ENCODE measurements at regions of chr1 and their contacts with region 1.

Region 1: GRCh38 chr1:18941221-18942141 is 15.0 kb downstream of the IFFO2 start:
- DNase-seq: no peak
- H3K4me3 ChIP-seq: peak overlapping the region in 1 of 4 experiments; percentile 0; a peak in 1 of 8 replicates
- H3K27ac ChIP-seq: peak overlapping the region; percentile 61
- H3K4me1 ChIP-seq: peaks cover 7 to 34% (median 27%) of the 10 kb centered on the region in 4 experiments
- H3K27me3 ChIP-seq: no peaks in the 10 kb centered on the region
- CTCF ChIP-seq: no peak
- EP300 ChIP-seq: no peak
- POLR2A ChIP-seq: peak in 1 of 2 experiments; percentile 39; a peak in 1 of 3 replicates
- RAD21 ChIP-seq: no peak

Region 2: DNA sequence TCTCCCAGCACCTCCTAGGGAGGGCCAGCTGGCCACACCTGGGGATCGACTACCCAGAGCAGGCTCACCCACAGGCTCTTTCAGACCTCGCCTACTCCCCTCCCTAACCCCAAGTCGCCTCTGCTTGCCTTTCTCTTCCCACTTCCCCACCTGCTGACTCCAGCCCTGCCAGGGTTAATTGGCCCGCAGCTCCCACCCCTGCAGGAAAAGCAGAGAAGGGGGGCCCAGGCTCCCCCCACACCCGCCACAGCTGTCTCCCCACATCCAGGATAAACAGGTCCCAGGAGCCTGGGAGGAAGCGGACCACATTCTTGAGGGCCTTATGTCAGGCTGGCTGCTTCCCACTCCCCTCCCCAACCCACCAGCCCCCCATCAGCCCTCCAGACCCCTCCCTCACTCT is 127.1 kb before region 1 on chr1:
- CTCF ChIA-PET with region 1: no interaction called
- POLR2A ChIA-PET with region 1: no interaction called
- DNase-seq: no peak
- H3K4me3 ChIP-seq: no peak overlapping the region
- H3K27ac ChIP-seq: no peak overlapping the region
- H3K4me1 ChIP-seq: peaks cover 0 to 6% (median 5%) of the 10 kb centered on the region in 4 experiments; a peak in 4 of 7 replicates
- H3K27me3 ChIP-seq: peaks cover 0 to 12% (median 3%) of the 10 kb centered on the region in 4 experiments; a peak in 4 of 7 replicates
- CTCF ChIP-seq: no peak
- EP300 ChIP-seq: no peak
- POLR2A ChIP-seq: no peak
- RAD21 ChIP-seq: no peak

Region 3: GRCh38 chr1:18926315-18927081 is 15.0 kb before region 1 on chr1:
- CTCF ChIA-PET with region 1: interaction called, 16 read pairs
- POLR2A ChIA-PET with region 1: interaction called, 4 read pairs
- DNase-seq: no peak
- H3K4me3 ChIP-seq: no peak overlapping the region
- H3K27ac ChIP-seq: no peak overlapping the region
- H3K4me1 ChIP-seq: peaks cover 0 to 20% (median 11%) of the 10 kb centered on the region in 4 experiments; a peak in 6 of 7 replicates
- H3K27me3 ChIP-seq: no peaks in the 10 kb centered on the region
- CTCF ChIP-seq: no peak
- EP300 ChIP-seq: no peak
- POLR2A ChIP-seq: no peak
- RAD21 ChIP-seq: no peak

Region 4: GRCh38 chr1:18956369-18957135 is 15.1 kb after region 1 on chr1 and contains the start of gene IFFO2:
- CTCF ChIA-PET with region 1: interaction called, 19 read pairs
- POLR2A ChIA-PET with region 1: interaction called, 28 read pairs
- DNase-seq: peak; percentile 91 to 100
- H3K4me3 ChIP-seq: peak within 1 kb of the TSS; percentile 49 to 74 (median 64)
- H3K27ac ChIP-seq: no peak within 1 kb of the TSS
- H3K4me1 ChIP-seq: peaks cover 0 to 3% (median 2%) of the 10 kb centered on the region in 4 experiments; a peak in 4 of 7 replicates
- H3K27me3 ChIP-seq: peaks cover 5 to 40% (median 24%) of the 10 kb centered on the region in 4 experiments; a peak in 6 of 7 replicates
- CTCF ChIP-seq: no peak
- EP300 ChIP-seq: no peak
- POLR2A ChIP-seq: peak; percentile 41 to 67
- RAD21 ChIP-seq: no peak
- total RNA-seq, gene IFFO2: 8.7 and 10.4 TPM in 2 replicates